ENCODE measurements at regions of chr22 and their contacts with region 1.

Region 1: GRCh38 chr22:39117585-39118191 is 20.6 kb downstream of the APOBEC3H start:
- DNase-seq: peak; percentile 92
- H3K4me3 Mint-ChIP-seq: peak overlapping the region; percentile 38
- H3K27ac Mint-ChIP-seq: peak overlapping the region; percentile 85
- H3K4me1 Mint-ChIP-seq: peaks cover 41% of the 10 kb centered on the region
- H3K27me3 Mint-ChIP-seq: no peaks in the 10 kb centered on the region

Region 2: DNA sequence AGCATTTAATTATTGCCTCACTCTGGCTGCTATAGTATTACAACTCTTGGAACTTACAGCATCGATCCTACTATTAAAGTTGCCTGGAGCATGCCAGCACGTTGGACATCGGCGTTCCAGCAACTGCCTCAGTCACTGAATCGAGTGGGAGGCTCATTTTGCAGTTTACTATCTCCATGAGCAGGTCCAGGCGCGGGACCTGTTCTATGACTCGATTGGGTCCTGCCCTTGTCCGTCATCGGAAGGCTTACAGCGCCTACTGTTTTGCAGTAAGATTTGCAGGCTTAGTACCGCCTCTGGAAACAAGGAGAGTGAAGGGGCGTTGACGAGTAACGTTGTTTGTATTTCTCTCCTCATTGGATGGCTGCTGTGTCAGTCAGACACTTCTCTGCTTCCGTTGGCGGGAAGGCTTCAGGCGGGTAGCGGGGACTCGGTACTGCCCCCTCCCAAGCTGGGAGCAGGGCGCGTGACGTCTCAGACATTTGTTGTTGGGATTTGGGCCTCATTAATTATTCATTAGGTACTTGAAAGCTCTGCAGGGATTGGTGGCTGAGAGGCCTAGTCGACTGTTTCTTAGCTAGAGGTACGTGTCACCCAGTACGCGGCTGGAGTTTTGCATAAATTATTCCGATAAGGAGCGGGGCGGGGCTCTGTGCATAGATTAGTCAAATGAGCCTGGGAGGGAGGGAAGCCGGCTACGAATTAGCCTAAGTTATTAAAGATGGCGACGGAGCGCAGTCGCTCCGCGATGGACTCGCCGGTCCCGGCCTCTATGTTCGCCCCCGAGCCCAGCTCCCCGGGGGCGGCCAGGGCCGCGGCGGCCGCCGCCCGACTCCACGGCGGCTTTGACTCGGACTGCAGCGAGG is 412.2 kb before region 1 on chr22 and contains the start of gene GTPBP1:
- intact Hi-C with region 1: loop called (anchors 10 kb)
- DNase-seq: peak; percentile 99
- H3K4me3 Mint-ChIP-seq: peak within 1 kb of the TSS; percentile 81
- H3K27ac Mint-ChIP-seq: peak within 1 kb of the TSS; percentile 98
- H3K4me1 Mint-ChIP-seq: peaks cover 54% of the 10 kb centered on the region
- H3K27me3 Mint-ChIP-seq: peaks cover 4% of the 10 kb centered on the region
- total RNA-seq, gene GTPBP1: 102 and 103 TPM in 2 replicates

Region 3: DNA sequence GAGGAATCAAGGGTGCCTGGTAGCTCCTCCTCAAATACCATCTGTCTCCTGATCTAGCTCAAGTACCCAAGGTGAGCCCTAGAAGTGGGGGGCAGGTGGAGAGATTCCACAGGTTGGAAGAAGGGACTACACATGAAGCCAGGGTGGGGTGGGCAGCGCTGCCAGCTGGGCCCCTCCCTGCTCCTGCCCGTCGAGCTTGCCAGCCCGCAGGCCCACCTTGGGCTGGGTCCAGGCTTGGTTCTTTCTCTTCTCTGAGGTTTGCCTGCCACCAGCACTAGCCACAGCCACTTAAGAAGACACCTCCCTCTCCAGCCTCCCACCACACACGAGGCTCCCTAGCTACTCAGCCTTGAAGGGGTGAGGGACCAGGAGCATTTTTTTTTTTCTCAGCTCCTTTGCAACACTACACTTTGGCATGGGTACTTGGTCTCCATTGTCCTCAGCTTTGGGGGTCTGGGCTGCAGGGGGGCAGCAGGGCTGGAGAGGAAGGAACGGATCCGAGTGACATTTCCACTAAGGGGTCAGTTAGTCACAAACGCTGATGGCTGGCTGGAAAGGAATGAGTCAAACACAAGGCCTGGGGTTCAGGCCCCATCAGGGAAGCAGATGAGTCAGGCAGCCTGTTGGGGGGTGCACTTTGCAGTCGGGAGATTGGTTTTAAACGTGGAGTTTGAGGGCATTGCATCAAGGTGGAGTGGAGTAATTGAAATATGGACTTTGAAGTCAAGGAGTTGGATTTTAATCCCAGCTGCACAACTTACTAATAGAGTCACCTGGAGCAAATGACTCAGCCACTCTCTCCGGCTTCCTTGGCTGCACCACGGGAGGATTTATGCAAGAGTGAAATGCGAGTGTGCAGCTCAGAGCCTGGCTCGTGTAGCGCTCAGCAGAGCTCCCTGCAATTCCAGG is 266.5 kb before region 1 on chr22:
- intact Hi-C with region 1: no loop called
- DNase-seq: no peak
- H3K4me3 Mint-ChIP-seq: no peak overlapping the region
- H3K27ac Mint-ChIP-seq: no peak overlapping the region
- H3K4me1 Mint-ChIP-seq: no peaks in the 10 kb centered on the region
- H3K27me3 Mint-ChIP-seq: peaks cover 37% of the 10 kb centered on the region

Region 4: GRCh38 chr22:39003165-39003638 is 114.5 kb before region 1 on chr22:
- intact Hi-C with region 1: loop called (anchors 1 kb)
- DNase-seq: peak; percentile 92
- H3K4me3 Mint-ChIP-seq: no peak overlapping the region
- H3K27ac Mint-ChIP-seq: peak overlapping the region; percentile 69
- H3K4me1 Mint-ChIP-seq: peaks cover 9% of the 10 kb centered on the region
- H3K27me3 Mint-ChIP-seq: peaks cover 13% of the 10 kb centered on the region

Region 5: DNA sequence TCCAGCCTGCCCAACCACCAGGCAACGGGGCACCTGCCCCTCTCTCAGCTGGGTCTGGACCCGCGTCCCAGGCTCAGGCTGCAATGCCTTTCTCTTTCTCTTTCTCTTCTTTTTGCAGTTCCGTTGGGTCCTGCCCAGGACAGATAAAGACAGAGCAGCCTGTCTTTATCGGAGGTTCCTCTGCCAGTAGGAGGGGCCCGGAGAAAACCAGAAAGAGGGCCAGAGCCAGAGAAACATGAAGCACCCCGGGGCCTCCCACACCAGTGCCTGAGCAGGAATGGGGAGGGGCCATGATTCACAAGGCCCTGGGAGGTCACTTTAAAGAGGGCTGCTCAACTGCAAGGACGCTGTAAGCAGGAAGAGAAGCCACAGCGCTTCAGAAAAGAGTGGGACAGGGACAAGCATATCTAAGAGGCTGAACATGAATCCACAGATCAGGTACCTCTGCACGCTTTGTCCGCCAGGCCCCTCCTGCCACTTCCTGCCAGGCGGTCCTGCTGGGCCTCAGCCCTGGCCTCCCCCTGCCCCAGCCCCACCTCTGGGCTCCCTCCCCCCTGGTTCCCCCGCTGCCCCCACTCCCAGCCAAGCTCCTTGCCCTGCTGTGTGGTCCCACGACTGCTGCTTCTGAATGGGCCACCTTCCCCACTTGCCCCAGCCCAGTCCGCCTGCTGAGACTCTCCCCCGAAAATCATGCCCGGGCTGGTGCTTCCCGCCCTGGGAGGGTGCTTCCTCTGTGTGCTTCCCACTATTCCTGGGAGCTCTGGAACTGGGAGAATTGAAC is 103.6 kb before region 1 on chr22 and contains the start of gene APOBEC3C:
- intact Hi-C with region 1: loop called (anchors 2 kb)
- DNase-seq: peak; percentile 95
- H3K4me3 Mint-ChIP-seq: peak within 1 kb of the TSS; percentile 99
- H3K27ac Mint-ChIP-seq: peak within 1 kb of the TSS; percentile 98
- H3K4me1 Mint-ChIP-seq: peaks cover 32% of the 10 kb centered on the region
- H3K27me3 Mint-ChIP-seq: no peaks in the 10 kb centered on the region
- total RNA-seq, gene APOBEC3C: 73.6 and 74.8 TPM in 2 replicates

Region 6: DNA sequence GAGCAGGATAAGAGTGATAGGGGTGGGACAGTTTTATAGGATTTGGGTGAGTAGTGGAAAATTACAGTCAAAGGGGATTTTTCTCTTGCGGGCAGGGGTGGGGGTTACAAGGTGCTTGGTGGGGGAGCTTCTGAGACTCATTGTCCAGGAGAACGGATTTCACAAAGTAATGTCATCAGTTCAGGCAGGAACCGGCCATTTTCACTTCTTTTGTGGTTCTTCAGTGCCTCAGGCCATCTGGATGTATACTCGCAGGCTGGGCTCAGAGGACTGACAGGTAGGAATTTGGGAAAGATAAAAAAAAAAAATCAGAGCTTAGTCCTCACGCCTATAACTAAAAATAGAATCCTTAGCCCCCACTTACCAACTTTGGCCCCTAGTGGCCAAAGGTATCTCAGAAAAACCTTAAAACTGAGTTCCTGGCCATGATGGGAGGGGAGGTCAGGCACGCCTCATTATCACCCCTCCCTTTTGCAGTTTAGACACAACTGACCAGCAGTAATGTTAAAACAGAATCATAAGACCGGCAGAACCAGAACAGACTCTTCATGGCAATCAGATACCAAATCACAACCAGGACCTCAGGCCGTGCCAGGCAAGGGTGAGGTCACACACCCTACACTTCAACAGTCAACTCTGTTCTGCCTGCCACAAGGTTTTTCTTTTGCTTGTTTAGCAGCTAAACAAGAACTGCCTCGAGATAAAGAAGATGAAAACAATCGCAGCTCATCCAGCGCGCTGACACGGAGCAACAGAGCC is 49.5 kb before region 1 on chr22:
- intact Hi-C with region 1: loop called (anchors 2 kb)
- DNase-seq: no peak
- H3K4me3 Mint-ChIP-seq: no peak overlapping the region
- H3K27ac Mint-ChIP-seq: no peak overlapping the region
- H3K4me1 Mint-ChIP-seq: peaks cover 7% of the 10 kb centered on the region
- H3K27me3 Mint-ChIP-seq: peaks cover 3% of the 10 kb centered on the region

Region 7: DNA sequence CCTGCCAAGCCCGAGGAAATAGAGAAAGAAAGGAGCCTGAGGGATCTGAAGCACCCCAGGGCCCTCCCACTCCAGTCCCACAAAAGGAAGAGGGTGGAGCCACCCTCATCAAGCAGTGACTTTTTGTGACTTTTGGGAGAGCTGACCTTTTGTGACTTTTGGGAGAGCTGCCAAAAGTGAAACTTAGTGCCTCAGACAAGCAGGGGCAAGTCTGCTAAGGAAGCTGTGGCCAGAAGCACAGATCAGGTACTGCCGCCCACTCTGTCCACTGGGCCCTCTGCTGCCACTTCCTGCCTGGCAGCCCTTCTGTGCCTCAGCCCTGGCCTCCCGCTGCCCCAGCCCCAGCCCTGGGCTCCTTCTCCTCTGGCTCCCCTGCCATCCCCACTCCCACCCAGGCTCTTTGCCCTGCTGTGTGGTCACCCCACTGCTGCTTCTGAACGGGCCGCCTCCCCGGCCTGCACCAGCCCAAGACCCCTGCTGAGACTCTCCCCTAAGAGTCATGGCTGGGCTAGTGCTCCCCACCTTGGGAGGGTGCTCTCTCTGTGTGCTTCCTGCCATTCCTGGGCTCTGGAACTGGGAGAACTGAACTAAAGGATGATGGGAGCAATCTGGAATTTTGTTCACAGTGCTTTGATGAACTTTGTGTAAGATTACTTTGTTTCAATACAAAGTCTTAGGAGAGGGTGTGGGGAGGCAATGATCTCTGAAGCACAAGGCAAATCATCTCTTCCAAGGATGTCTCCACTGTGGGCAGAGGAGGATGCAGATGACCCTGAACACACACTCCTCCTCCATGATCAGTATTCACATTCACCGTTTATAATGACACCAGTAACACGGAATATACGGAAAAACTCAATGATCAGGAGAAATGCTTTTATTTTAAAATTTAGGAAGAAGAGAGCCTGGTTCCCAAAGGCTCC is 20.3 kb before region 1 on chr22 and contains the start of gene APOBEC3H:
- intact Hi-C with region 1: loop called (anchors 1 kb)
- DNase-seq: peak; percentile 84
- H3K4me3 Mint-ChIP-seq: peak within 1 kb of the TSS; percentile 83
- H3K27ac Mint-ChIP-seq: peak within 1 kb of the TSS; percentile 91
- H3K4me1 Mint-ChIP-seq: peaks cover 71% of the 10 kb centered on the region
- H3K27me3 Mint-ChIP-seq: no peaks in the 10 kb centered on the region
- total RNA-seq, gene APOBEC3H: 5.8 and 7.6 TPM in 2 replicates